Left colon (tissue), 2 donors: ENCODE measurements at regions of chr9 and their contacts with region 1.

Region 1: DNA sequence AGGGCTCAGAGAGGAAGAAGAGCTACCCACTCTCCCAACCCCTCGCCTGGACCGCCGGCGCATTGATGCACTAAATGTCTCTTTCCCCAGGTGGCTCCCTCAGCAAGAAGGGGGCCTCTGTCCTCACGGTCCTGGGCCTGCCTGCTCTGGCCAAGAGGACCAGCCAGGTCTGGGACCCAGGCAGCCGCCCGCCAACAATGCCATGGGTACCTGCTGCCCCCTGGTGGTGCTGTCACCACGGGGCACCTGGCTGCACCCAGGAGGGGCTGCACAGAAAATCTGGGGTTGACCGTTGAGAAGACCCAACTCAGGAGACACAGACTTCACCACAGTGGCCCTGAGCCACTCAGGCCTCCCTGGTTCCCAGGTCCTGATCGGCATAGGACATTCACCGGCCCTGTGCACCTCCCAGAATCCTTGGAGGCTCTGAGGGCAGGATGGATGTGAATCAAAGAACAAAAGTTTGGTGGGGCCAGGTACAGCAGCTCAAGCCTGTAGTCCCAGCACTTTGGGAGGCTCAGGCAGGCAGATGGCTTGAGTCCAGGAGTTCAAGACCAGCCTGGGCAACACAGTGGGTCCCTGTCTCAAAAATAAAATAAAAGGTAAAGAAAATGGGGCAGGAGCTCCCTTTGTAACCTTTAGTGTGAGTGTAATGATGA is 2.4 kb upstream of the VAV2 start:
- DNase-seq: peak; percentile 48 to 87
- ATAC-seq: peak; percentile 51

Region 2: GRCh38 chr9:133792721-133793470 is 201.6 kb before region 1 on chr9:
- intact Hi-C with region 1: loop called (anchors 5 kb)
- DNase-seq: peak; percentile 68 to 78
- ATAC-seq: peak; percentile 51